ENCODE measurements at regions of chr1 and their contacts with region 1.

Region 1: DNA sequence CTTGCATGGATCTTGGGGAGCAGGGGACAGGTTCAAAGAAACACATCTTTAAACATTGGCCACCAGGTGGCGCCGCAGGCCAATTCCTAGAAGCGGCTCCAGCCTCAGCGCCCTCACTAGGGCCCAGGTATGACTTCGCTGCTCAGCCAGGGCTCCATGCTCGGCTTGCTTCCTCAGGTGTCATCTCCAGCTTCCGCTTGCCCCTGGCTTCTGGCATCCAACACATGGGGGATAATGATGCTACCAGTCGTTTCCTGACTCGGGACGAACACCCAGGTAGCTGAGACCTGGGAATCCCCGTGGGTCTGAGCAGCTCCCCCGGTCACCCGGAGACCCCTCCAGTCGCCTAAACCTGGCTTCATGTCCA is 8.5 kb upstream of the MEX3A start:
- DNase-seq: peak; percentile 93
- ATAC-seq: peak; percentile 87

Region 2: GRCh38 chr1:156221986-156222692 is 131.3 kb after region 1 on chr1:
- intact Hi-C with region 1: loop called (anchors 5 kb)
- DNase-seq: no peak
- ATAC-seq: no peak

Region 3: DNA sequence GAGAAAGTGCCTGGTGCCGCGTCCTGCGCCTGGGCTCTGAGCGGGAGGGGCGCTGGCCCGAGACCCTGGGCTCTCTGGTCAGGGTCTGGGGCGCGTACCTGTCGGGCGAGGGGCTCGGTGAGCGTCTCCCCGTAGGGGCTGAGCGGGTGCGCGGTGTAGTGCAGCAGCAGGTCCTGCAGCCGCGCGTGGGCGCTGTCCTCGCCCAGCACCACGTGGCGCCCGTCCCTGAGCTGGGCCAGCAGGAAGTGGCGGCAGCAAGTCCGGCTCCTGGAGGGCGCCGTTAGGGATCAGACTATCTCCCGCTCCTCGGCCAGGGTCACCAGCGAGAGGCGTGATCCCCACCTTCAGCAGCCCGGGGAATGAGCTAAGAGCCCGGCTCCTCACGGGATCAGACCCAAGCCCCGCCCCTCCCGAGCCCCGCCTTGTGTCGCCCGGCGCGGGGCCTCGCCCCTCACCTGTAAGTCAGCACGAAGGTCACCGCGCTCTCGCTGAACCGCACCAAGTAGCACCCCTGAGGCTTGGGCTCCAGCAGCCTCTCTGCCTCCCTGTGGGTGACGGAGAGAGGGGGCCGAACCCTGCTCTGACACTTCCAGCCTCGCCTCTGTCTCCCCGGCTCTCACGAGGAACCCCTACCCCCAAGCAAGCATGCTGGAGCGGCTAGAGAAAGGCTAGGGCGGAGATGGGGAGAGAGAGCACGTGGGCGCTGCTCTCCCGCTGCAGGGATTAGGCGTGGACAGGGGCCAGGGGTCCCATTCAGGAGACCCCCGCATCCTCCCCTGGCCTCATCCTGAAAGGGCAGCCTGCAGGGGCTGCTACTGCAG is 723.2 kb after region 1 on chr1:
- intact Hi-C with region 1: no loop called
- DNase-seq: peak; percentile 80
- ATAC-seq: peak; percentile 85

Measured in sciatic nerve (tissue), 2 donors.